Naive thymus-derived CD4-positive, alpha-beta T cell (primary cell): ENCODE measurements at regions of chr9 and their contacts with region 1.

Region 1: GRCh38 chr9:6412487-6413364 is at the start of gene UHRF2:
- DNase-seq: peak; percentile 88 to 99 (median 97)
- ATAC-seq: peak; percentile 93
- H3K4me3 ChIP-seq: peak within 1 kb of the TSS; percentile 67
- H3K4me3 Mint-ChIP-seq: peak within 1 kb of the TSS; percentile 80 to 98 (median 92)
- H3K27ac ChIP-seq: peak within 1 kb of the TSS; percentile 86
- H3K27ac Mint-ChIP-seq: peak within 1 kb of the TSS; percentile 87 to 98 (median 95)
- H3K4me1 ChIP-seq: peaks cover 20 to 26% of the 10 kb centered on the region in 2 donors
- H3K4me1 Mint-ChIP-seq: peaks cover 23 to 41% (median 35%) of the 10 kb centered on the region in 7 donors
- H3K27me3 ChIP-seq: no peaks in the 10 kb centered on the region
- H3K27me3 Mint-ChIP-seq: peaks cover 0 to 9% (median 0%) of the 10 kb centered on the region in 5 donors
- total RNA-seq, gene UHRF2: 78.7 to 117 (median 111) TPM

Region 2: DNA sequence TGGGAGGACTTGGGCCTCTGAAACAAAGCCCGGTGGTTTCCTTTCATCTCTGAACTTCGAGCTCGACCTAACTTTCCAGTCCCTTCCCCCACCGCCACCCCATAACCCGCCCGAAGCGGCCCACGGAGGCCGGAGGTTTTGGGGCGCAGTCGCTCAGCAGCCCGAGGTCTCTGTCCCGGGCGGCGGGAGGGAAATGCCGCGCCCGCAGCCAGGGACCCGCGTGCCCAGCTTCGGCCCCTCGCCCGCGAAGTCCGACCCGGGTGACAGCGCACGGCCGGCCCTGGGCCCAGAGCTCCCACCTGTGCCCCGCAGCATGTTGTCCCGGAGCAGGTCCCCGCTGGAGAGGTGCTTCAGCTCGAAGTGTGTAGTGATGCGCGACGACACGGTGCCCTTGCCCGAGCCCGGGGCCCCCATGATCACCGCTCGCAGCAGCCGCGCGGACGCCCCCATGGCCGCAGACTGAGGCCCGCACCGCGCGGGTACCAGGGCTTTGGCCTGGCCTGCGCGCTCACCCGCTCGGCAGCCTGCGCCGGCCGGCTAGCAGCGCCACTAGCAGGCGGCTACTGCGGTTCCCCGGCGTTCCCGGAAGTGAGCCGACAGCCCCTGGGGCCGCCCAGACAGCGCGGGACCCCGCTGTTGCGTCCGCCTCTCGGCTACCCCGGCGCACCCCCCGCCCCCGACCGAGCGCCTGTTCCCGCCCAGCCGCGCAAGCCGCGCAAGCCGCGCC is 1671.9 kb before region 1 on chr9 and contains the start of gene AK3:
- CTCF ChIA-PET with region 1: no interaction called
- POLR2A ChIA-PET with region 1: no interaction called
- intact Hi-C with region 1: loop called in 1 of 2 experiments (anchors 2 kb)
- DNase-seq: peak; percentile 72 to 85 (median 83)
- ATAC-seq: peak; percentile 95
- H3K4me3 ChIP-seq: peak within 1 kb of the TSS; percentile 73
- H3K4me3 Mint-ChIP-seq: peak within 1 kb of the TSS; percentile 88 to 99 (median 94)
- H3K27ac ChIP-seq: peak within 1 kb of the TSS; percentile 86
- H3K27ac Mint-ChIP-seq: peak within 1 kb of the TSS; percentile 86 to 98 (median 93)
- H3K4me1 ChIP-seq: peaks cover 10 to 16% of the 10 kb centered on the region in 2 donors
- H3K4me1 Mint-ChIP-seq: peaks cover 22 to 49% (median 40%) of the 10 kb centered on the region in 7 donors
- H3K27me3 ChIP-seq: no peaks in the 10 kb centered on the region
- H3K27me3 Mint-ChIP-seq: no peaks in the 10 kb centered on the region
- total RNA-seq, gene AK3: 18.0 to 34.8 (median 25.8) TPM

Region 3: GRCh38 chr9:5832543-5833529 is 579.9 kb before region 1 on chr9 and contains the start of gene ERMP1:
- CTCF ChIA-PET with region 1: no interaction called
- POLR2A ChIA-PET with region 1: interaction called, 3 read pairs
- intact Hi-C with region 1: loop called in 1 of 2 experiments (anchors 2 kb)
- DNase-seq: peak; percentile 83 to 94 (median 91)
- ATAC-seq: peak; percentile 95
- H3K4me3 ChIP-seq: peak within 1 kb of the TSS; percentile 85
- H3K4me3 Mint-ChIP-seq: peak within 1 kb of the TSS; percentile 91 to 99 (median 95)
- H3K27ac ChIP-seq: peak within 1 kb of the TSS; percentile 60
- H3K27ac Mint-ChIP-seq: peak within 1 kb of the TSS; percentile 79 to 96 (median 89)
- H3K4me1 ChIP-seq: peaks cover 25 to 33% of the 10 kb centered on the region in 2 donors
- H3K4me1 Mint-ChIP-seq: peaks cover 28 to 71% (median 60%) of the 10 kb centered on the region in 7 donors
- H3K27me3 ChIP-seq: no peaks in the 10 kb centered on the region
- H3K27me3 Mint-ChIP-seq: no peaks in the 10 kb centered on the region
- total RNA-seq, gene ERMP1: 9.5 to 37.1 (median 20.0) TPM

Region 4: DNA sequence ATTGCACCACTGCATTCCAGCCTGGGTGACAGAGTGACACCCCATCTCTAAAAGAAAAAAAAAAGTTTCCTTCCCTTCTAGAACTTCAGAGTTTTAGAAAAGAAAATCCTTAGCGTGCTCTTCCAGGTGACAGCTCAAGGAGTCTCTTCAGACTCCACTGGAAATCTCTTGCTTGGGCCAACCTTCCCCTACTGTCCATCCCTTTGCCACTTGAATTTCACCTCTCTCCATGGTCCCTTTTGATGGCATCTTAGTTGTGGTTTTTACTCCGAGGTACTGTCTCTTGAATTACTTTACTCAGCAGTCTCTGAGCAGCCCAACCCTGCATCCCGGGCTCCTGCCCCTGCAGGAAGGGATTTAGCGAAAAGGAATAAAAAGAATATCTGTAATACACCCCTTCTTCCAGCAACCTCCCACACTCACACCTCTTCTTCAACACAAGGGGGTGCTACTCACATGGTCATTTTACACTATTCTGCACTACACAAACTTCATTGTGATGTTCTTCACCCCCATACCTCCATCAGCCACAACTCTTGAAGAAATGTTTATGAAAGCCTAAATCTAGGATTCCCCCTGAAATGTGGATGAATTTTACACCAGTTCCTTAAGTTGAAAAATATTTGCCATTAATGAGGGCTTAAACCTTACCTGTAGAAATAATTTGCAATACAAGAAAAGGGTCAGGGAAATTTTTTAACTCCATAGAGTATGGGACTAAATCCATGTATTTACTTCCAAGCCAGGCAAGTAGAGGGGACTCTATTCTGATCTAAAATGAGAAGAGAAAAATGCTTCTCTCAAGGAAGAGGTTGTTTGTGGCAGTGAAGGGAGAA is 58.7 kb before region 1 on chr9:
- CTCF ChIA-PET with region 1: interaction called, 12 read pairs
- POLR2A ChIA-PET with region 1: interaction called, 3 read pairs
- intact Hi-C with region 1: loop called (anchors 1 kb)
- DNase-seq: peak in 8 of 9 donors; percentile 22 to 69 (median 58)
- ATAC-seq: peak; percentile 92
- H3K4me3 ChIP-seq: no peak overlapping the region
- H3K4me3 Mint-ChIP-seq: no peak overlapping the region
- H3K27ac ChIP-seq: no peak overlapping the region
- H3K27ac Mint-ChIP-seq: no peak overlapping the region
- H3K4me1 ChIP-seq: no peaks in the 10 kb centered on the region
- H3K4me1 Mint-ChIP-seq: peaks cover 0 to 16% (median 0%) of the 10 kb centered on the region in 7 donors
- H3K27me3 ChIP-seq: no peaks in the 10 kb centered on the region
- H3K27me3 Mint-ChIP-seq: peaks cover 5 to 19% (median 9%) of the 10 kb centered on the region in 5 donors

Region 5: DNA sequence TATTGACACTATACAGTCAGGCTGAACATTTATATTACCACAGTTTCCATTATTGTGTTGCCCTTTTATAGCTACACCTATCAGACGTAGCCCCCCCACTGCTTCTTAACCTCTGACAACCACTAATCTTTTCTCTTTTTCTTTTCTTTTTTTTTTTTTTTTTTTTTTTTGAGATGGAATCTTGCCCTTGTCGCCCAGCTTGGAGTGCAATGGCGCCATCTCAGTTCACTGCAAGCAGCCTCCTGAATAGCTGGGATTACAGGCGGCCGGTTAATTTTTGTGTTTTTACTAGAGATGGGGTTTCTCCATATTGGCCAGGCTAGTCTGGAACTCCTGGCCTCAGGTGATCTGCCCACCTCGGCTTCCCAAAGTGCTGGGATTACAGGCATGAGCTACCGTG is 75.7 kb after region 1 on chr9:
- CTCF ChIA-PET with region 1: no interaction called
- POLR2A ChIA-PET with region 1: interaction called, 5 read pairs
- intact Hi-C with region 1: loop called (anchors 2 to 5 kb)
- DNase-seq: peak in 1 of 9 donors; percentile 0
- ATAC-seq: no peak
- H3K4me3 ChIP-seq: no peak overlapping the region
- H3K4me3 Mint-ChIP-seq: no peak overlapping the region
- H3K27ac ChIP-seq: no peak overlapping the region
- H3K27ac Mint-ChIP-seq: no peak overlapping the region
- H3K4me1 ChIP-seq: no peaks in the 10 kb centered on the region
- H3K4me1 Mint-ChIP-seq: peaks cover 0 to 17% (median 6%) of the 10 kb centered on the region in 7 donors
- H3K27me3 ChIP-seq: no peaks in the 10 kb centered on the region
- H3K27me3 Mint-ChIP-seq: no peaks in the 10 kb centered on the region

Region 6: GRCh38 chr9:6552033-6552432 is 139.3 kb after region 1 on chr9:
- CTCF ChIA-PET with region 1: no interaction called
- POLR2A ChIA-PET with region 1: no interaction called
- intact Hi-C with region 1: no loop called
- DNase-seq: no peak
- ATAC-seq: no peak
- H3K4me3 ChIP-seq: no peak overlapping the region
- H3K4me3 Mint-ChIP-seq: no peak overlapping the region
- H3K27ac ChIP-seq: no peak overlapping the region
- H3K27ac Mint-ChIP-seq: no peak overlapping the region
- H3K4me1 ChIP-seq: no peaks in the 10 kb centered on the region
- H3K4me1 Mint-ChIP-seq: peaks cover 0 to 3% (median 0%) of the 10 kb centered on the region in 7 donors
- H3K27me3 ChIP-seq: no peaks in the 10 kb centered on the region
- H3K27me3 Mint-ChIP-seq: peaks cover 0 to 6% (median 0%) of the 10 kb centered on the region in 5 donors

Region 7: DNA sequence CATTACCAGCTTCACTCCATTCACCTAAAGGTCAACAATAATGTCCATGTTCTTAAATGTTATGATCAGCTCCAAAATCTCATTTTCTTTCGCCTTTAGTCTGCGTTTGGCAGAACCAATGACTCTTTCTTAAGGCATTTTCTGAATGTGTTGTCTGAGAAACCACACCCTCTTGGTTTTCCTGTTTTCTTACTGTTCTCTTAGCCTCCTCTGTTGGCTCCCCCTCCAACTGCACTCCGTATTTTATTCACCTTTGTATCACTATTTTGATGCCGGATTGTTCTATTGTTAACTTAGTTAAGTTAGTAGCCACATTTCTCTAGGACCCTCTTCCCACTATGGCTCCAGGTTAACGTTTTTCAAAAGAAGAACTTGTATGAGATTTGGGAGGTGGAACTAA is 1201.2 kb after region 1 on chr9:
- CTCF ChIA-PET with region 1: no interaction called
- POLR2A ChIA-PET with region 1: no interaction called
- intact Hi-C with region 1: loop called in 1 of 2 experiments (anchors 5 kb)
- DNase-seq: peak in 6 of 9 donors; percentile 15 to 59 (median 46)
- ATAC-seq: peak; percentile 70
- H3K4me3 ChIP-seq: peak overlapping the region; percentile 0
- H3K4me3 Mint-ChIP-seq: peak overlapping the region; percentile 68 to 90 (median 82)
- H3K27ac ChIP-seq: peak overlapping the region; percentile 31
- H3K27ac Mint-ChIP-seq: peak overlapping the region; percentile 71 to 87 (median 85)
- H3K4me1 ChIP-seq: peaks cover 9 to 29% of the 10 kb centered on the region in 2 donors
- H3K4me1 Mint-ChIP-seq: peaks cover 18 to 50% (median 38%) of the 10 kb centered on the region in 7 donors
- H3K27me3 ChIP-seq: no peaks in the 10 kb centered on the region
- H3K27me3 Mint-ChIP-seq: peaks cover 0 to 17% (median 0%) of the 10 kb centered on the region in 5 donors